Mammary epithelial cell (primary cell): ENCODE measurements at regions of chr6 and their contacts with region 1.

Region 1: DNA sequence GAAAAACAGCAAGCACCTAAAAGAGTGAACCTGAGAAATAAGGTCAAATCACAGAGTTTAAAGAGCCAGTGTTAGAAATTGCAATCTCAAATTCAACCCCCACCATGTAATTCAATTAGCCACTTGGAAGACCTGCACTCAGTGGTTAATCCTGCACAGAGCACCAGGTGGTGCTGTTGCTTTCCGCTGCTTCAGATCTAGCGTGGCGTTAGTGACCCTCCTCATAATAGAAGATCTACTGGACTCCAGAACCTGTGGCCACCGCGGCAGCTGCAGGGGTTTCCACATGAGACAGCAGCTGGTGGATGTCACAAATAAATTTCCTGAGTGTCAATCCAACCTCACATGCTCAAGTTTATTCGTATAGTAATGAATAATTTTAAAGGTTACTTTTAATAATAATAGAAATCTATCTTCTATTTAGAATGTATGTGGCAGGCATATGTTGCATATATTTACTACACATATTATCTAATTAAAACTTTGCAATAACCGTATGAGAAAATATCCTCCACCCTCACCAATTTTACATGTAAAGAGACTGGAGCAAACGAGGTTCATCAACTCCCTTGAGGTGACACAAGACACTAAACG is 84.4 kb downstream of the SYNE1 start:
- DNase-seq: peak; percentile 43
- H3K4me3 ChIP-seq: no peak overlapping the region
- H3K27ac ChIP-seq: no peak overlapping the region
- H3K4me1 ChIP-seq: no peaks in the 10 kb centered on the region
- H3K27me3 ChIP-seq: no peaks in the 10 kb centered on the region
- CTCF ChIP-seq: peak; percentile 82 to 97

Region 2: DNA sequence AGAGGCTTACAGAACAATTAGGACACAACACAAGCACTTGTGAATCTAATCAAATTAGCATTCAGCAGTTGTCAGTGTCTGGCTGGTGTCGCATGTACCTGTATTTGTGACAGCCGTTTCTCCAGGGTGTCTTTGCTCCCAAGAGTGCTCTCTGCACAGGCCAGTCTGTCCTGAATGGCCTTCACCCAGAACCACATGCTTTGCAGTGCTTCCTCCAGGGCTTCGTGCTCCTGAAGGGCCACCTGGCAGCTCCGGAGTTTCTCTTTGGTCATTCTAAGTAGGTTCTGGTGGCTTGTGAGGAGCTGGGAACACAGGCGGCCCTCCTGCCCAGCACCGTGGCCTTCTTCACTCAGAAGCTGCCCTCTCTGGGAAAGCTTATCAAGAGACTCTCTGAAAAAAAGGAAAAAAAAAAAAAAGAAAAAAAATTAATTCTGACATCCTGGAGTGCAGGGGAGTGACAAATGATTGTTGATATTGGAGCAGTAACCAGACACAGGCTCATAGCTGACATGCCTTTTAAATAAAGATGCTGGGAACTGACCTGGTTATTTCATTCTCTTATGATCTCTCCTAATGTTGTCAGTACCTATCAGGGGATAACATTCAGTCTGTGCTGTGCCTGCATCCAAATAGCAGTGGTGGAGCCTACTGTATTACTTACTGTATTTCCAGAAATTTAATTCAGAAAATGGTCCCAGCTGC is 161.4 kb before region 1 on chr6:
- CTCF ChIA-PET with region 1: no interaction called
- dilution Hi-C with region 1: no loop called
- in situ Hi-C with region 1: no loop called
- intact Hi-C with region 1: no loop called
- DNase-seq: no peak
- H3K4me3 ChIP-seq: no peak overlapping the region
- H3K27ac ChIP-seq: no peak overlapping the region
- H3K4me1 ChIP-seq: no peaks in the 10 kb centered on the region
- H3K27me3 ChIP-seq: no peaks in the 10 kb centered on the region
- CTCF ChIP-seq: no peak

Region 3: GRCh38 chr6:152441902-152442301 is 110.8 kb before region 1 on chr6:
- CTCF ChIA-PET with region 1: no interaction called
- dilution Hi-C with region 1: no loop called
- in situ Hi-C with region 1: no loop called
- intact Hi-C with region 1: no loop called
- DNase-seq: no peak
- H3K4me3 ChIP-seq: no peak overlapping the region
- H3K27ac ChIP-seq: no peak overlapping the region
- H3K4me1 ChIP-seq: no peaks in the 10 kb centered on the region
- H3K27me3 ChIP-seq: no peaks in the 10 kb centered on the region
- CTCF ChIP-seq: no peak

Region 4: GRCh38 chr6:152484806-152485205 is 67.9 kb before region 1 on chr6:
- CTCF ChIA-PET with region 1: no interaction called
- dilution Hi-C with region 1: no loop called
- in situ Hi-C with region 1: no loop called
- intact Hi-C with region 1: loop called (anchors 2 kb)
- DNase-seq: no peak
- H3K4me3 ChIP-seq: no peak overlapping the region
- H3K27ac ChIP-seq: no peak overlapping the region
- H3K4me1 ChIP-seq: no peaks in the 10 kb centered on the region
- H3K27me3 ChIP-seq: no peaks in the 10 kb centered on the region
- CTCF ChIP-seq: no peak

Region 5: DNA sequence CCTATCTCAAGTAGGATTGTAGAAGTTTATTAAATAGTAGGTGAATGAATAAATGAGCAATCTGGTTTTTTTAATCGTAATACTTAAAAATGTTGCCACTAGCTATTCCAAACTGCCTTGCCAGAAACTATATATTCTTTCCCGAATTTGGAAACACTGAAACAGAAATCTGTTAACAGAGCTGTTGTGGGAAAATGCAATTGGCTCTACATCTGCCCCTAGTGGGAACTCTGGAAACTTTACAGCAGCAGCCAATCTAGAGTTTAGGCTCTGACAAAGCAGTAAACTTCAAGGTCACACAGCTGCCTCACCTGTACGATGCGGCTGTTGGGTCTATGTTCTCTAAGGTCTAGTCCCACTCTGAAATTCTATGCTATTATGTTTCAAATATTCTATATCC is 42.8 kb after region 1 on chr6:
- CTCF ChIA-PET with region 1: no interaction called
- dilution Hi-C with region 1: no loop called
- in situ Hi-C with region 1: no loop called
- intact Hi-C with region 1: loop called (anchors 1 kb)
- DNase-seq: no peak
- H3K4me3 ChIP-seq: no peak overlapping the region
- H3K27ac ChIP-seq: no peak overlapping the region
- H3K4me1 ChIP-seq: no peaks in the 10 kb centered on the region
- H3K27me3 ChIP-seq: no peaks in the 10 kb centered on the region
- CTCF ChIP-seq: peak; percentile 49 to 58

Region 6: GRCh38 chr6:152642989-152643388 is 90.3 kb after region 1 on chr6:
- CTCF ChIA-PET with region 1: interaction called, 3 read pairs
- dilution Hi-C with region 1: no loop called
- in situ Hi-C with region 1: loop called (anchors 5 kb)
- intact Hi-C with region 1: loop called (anchors 1 kb)
- DNase-seq: peak; percentile 56
- H3K4me3 ChIP-seq: no peak overlapping the region
- H3K27ac ChIP-seq: no peak overlapping the region
- H3K4me1 ChIP-seq: no peaks in the 10 kb centered on the region
- H3K27me3 ChIP-seq: peaks cover under 1% of the 10 kb centered on the region
- CTCF ChIP-seq: peak; percentile 68 to 85

Region 7: GRCh38 chr6:152648105-152648504 is 95.4 kb after region 1 on chr6:
- CTCF ChIA-PET with region 1: interaction called, 3 read pairs
- dilution Hi-C with region 1: no loop called
- in situ Hi-C with region 1: loop called (anchors 5 kb)
- intact Hi-C with region 1: loop called (anchors 1 kb)
- DNase-seq: no peak
- H3K4me3 ChIP-seq: no peak overlapping the region
- H3K27ac ChIP-seq: no peak overlapping the region
- H3K4me1 ChIP-seq: no peaks in the 10 kb centered on the region
- H3K27me3 ChIP-seq: peaks cover 2% of the 10 kb centered on the region
- CTCF ChIP-seq: no peak

Region 8: DNA sequence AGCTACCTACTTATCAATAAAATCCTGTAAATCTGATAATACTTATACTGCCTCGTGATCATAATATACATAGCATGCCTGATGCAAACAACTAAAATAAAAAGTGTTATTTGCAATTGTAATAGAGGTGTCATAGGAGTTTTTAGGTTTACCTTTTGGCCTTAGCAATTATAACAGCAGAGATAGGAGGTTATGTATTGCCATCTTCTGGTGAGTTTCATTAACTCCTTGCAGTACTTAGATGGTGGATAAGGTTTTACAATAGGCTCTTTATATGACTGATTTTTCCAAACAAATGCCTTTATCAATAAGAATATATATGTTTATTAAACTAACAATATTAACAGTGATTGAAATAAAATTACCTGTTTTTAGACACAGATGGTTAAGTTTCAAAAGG is 117.2 kb after region 1 on chr6:
- CTCF ChIA-PET with region 1: interaction called, 5 read pairs
- dilution Hi-C with region 1: no loop called
- in situ Hi-C with region 1: no loop called
- intact Hi-C with region 1: loop called (anchors 1 kb)
- DNase-seq: peak; percentile 21
- H3K4me3 ChIP-seq: no peak overlapping the region
- H3K27ac ChIP-seq: no peak overlapping the region
- H3K4me1 ChIP-seq: no peaks in the 10 kb centered on the region
- H3K27me3 ChIP-seq: no peaks in the 10 kb centered on the region
- CTCF ChIP-seq: peak; percentile 30 to 41

Region 9: GRCh38 chr6:153207006-153207405 is 654.3 kb after region 1 on chr6:
- CTCF ChIA-PET with region 1: no interaction called
- dilution Hi-C with region 1: no loop called
- in situ Hi-C with region 1: no loop called
- intact Hi-C with region 1: no loop called
- DNase-seq: no peak
- H3K4me3 ChIP-seq: no peak overlapping the region
- H3K27ac ChIP-seq: no peak overlapping the region
- H3K4me1 ChIP-seq: peaks cover 3% of the 10 kb centered on the region
- H3K27me3 ChIP-seq: no peaks in the 10 kb centered on the region
- CTCF ChIP-seq: no peak